ENCODE measurements at regions of chr16 and their contacts with region 1.

Region 1: GRCh38 chr16:74641969-74642368 is 24.7 kb downstream of the RFWD3 start:
- DNase-seq: no peak
- H3K4me3 ChIP-seq: no peak overlapping the region
- H3K4me3 Mint-ChIP-seq: no peak overlapping the region
- H3K27ac Mint-ChIP-seq: peak overlapping the region; percentile 22
- H3K4me1 ChIP-seq: no peaks in the 10 kb centered on the region; the same call in 1 of the 2 replicates
- H3K4me1 Mint-ChIP-seq: no peaks in the 10 kb centered on the region
- H3K27me3 ChIP-seq: no peaks in the 10 kb centered on the region
- H3K27me3 Mint-ChIP-seq: no peaks in the 10 kb centered on the region
- CTCF ChIP-seq: no peak

Region 2: GRCh38 chr16:74466872-74467271 is 175.1 kb before region 1 on chr16:
- CTCF ChIA-PET with region 1: no interaction called
- POLR2A ChIA-PET with region 1: no interaction called
- intact Hi-C with region 1: no loop called
- DNase-seq: no peak
- H3K4me3 ChIP-seq: no peak overlapping the region
- H3K4me3 Mint-ChIP-seq: no peak overlapping the region
- H3K27ac Mint-ChIP-seq: no peak overlapping the region
- H3K4me1 ChIP-seq: peaks cover 15% of the 10 kb centered on the region
- H3K4me1 Mint-ChIP-seq: peaks cover 11% of the 10 kb centered on the region
- H3K27me3 ChIP-seq: no peaks in the 10 kb centered on the region
- H3K27me3 Mint-ChIP-seq: no peaks in the 10 kb centered on the region
- CTCF ChIP-seq: no peak

Region 3: DNA sequence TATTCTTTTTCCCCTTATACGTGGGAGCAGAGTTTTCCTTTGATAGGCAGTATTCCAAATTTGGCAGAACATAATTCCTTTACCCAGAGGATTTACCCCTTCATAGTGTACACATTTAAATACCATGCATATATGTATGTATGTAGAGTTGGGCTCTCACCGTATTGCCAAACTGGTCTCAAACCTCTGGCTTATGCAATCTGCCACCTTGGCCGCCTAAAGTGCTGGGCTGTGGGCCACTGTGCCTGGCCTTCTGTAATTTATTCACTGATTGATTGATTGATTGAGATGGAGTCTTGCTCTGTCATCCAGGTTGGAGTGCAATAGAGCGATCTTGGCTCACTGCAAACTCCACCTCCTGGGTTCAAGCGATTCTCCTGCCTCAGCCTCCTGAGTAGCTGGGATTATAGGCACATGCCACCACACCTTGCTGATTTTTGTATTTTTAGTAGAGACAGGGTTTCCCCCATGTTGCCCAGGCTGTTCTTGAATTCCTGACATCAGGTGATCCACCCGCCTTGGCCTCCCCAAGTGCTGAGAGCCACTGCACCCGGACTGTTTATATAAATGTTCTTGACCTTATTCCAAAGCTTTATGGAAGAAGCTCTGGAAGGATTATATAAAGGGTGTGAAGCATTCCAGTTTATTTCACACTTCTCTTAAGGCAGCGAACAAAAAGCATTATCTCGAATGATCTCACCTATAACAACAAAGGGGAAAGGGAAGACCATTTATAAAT is 49.9 kb before region 1 on chr16:
- CTCF ChIA-PET with region 1: no interaction called
- POLR2A ChIA-PET with region 1: interaction called, 10 read pairs
- intact Hi-C with region 1: no loop called
- DNase-seq: no peak
- H3K4me3 ChIP-seq: no peak overlapping the region
- H3K4me3 Mint-ChIP-seq: no peak overlapping the region
- H3K27ac Mint-ChIP-seq: no peak overlapping the region
- H3K4me1 ChIP-seq: peaks cover 3% of the 10 kb centered on the region
- H3K4me1 Mint-ChIP-seq: peaks cover 4% of the 10 kb centered on the region
- H3K27me3 ChIP-seq: no peaks in the 10 kb centered on the region
- H3K27me3 Mint-ChIP-seq: no peaks in the 10 kb centered on the region
- CTCF ChIP-seq: no peak